ENCODE measurements at regions of chr1 and their contacts with region 1.

Region 1: GRCh38 chr1:216221260-216221700 is 202.0 kb downstream of the USH2A start:
- DNase-seq: peak; percentile 35
- H3K4me3 ChIP-seq: peak overlapping the region; percentile 51 to 54
- H3K27ac ChIP-seq: peak overlapping the region in 1 of 2 experiments; percentile 88; a peak in 2 of 4 replicates
- H3K4me1 ChIP-seq: peaks cover 0 to 16% of the 10 kb centered on the region in 2 experiments; a peak in 2 of 4 replicates
- H3K27me3 ChIP-seq: no peaks in the 10 kb centered on the region
- CTCF ChIP-seq: peak; percentile 86
- EP300 ChIP-seq: 0 out of 4 replicates have a peak, but pooled peaks of 1 of the 2 experiments have one; percentile 10
- RAD21 ChIP-seq: peak; percentile 83

Region 2: DNA sequence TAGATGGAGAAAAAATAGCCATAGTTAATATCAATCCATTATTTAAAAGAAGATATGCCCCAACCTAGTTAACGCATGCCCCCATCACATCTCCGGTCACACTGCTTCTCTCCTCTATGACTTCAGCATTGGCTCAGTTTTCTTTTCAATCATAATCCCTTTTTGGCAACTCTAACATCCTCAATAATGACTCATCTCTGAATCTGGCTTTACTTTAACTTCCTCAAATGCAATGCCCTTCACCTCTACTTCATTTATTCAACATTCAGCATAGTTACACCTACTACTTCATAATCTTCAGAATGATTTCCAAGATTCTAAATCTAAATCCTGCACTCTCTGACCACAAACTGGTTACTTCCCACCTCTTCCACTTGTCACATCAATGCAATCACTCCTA is 215.4 kb before region 1 on chr1:
- CTCF ChIA-PET with region 1: interaction called, 13 read pairs
- POLR2A ChIA-PET with region 1: no interaction called
- DNase-seq: no peak
- H3K4me3 ChIP-seq: no peak overlapping the region
- H3K27ac ChIP-seq: no peak overlapping the region
- H3K4me1 ChIP-seq: no peaks in the 10 kb centered on the region; a peak in 1 of 4 replicates
- H3K27me3 ChIP-seq: no peaks in the 10 kb centered on the region
- CTCF ChIP-seq: no peak
- EP300 ChIP-seq: no peak
- RAD21 ChIP-seq: no peak

Region 3: GRCh38 chr1:216183007-216183406 is 38.3 kb before region 1 on chr1:
- CTCF ChIA-PET with region 1: interaction called, 20 read pairs
- POLR2A ChIA-PET with region 1: no interaction called
- DNase-seq: no peak
- H3K4me3 ChIP-seq: peak overlapping the region in 1 of 2 experiments; percentile 22; a peak in 1 of 4 replicates
- H3K27ac ChIP-seq: no peak overlapping the region
- H3K4me1 ChIP-seq: peaks cover 12 to 15% of the 10 kb centered on the region in 2 experiments; a peak in 3 of 4 replicates
- H3K27me3 ChIP-seq: no peaks in the 10 kb centered on the region
- CTCF ChIP-seq: no peak
- EP300 ChIP-seq: no peak
- RAD21 ChIP-seq: no peak

Region 4: GRCh38 chr1:216201946-216202345 is 19.3 kb before region 1 on chr1:
- CTCF ChIA-PET with region 1: interaction called, 15 read pairs
- POLR2A ChIA-PET with region 1: no interaction called
- DNase-seq: no peak
- H3K4me3 ChIP-seq: no peak overlapping the region
- H3K27ac ChIP-seq: no peak overlapping the region
- H3K4me1 ChIP-seq: no peaks in the 10 kb centered on the region; a peak in 1 of 4 replicates
- H3K27me3 ChIP-seq: no peaks in the 10 kb centered on the region
- CTCF ChIP-seq: no peak
- EP300 ChIP-seq: no peak
- RAD21 ChIP-seq: no peak

Region 5: GRCh38 chr1:216523449-216524190 is 302.3 kb after region 1 on chr1:
- CTCF ChIA-PET with region 1: interaction called, 14 read pairs
- POLR2A ChIA-PET with region 1: no interaction called
- DNase-seq: no peak
- H3K4me3 ChIP-seq: no peak overlapping the region
- H3K27ac ChIP-seq: peak overlapping the region in 1 of 2 experiments; percentile 39; a peak in 1 of 4 replicates
- H3K4me1 ChIP-seq: peaks cover 0 to 31% of the 10 kb centered on the region in 2 experiments; a peak in 2 of 4 replicates
- H3K27me3 ChIP-seq: no peaks in the 10 kb centered on the region
- CTCF ChIP-seq: no peak
- EP300 ChIP-seq: no peak
- RAD21 ChIP-seq: no peak

Region 6: GRCh38 chr1:216723274-216723780 is 502.0 kb after region 1 on chr1 and contains the start of gene ESRRG:
- CTCF ChIA-PET with region 1: interaction called, 18 read pairs
- POLR2A ChIA-PET with region 1: no interaction called
- DNase-seq: peak; percentile 75
- H3K4me3 ChIP-seq: peak within 1 kb of the TSS; percentile 61 to 71
- H3K27ac ChIP-seq: peak within 1 kb of the TSS in 1 of 2 experiments; percentile 76; a peak in 2 of 4 replicates
- H3K4me1 ChIP-seq: peaks cover 0 to 4% of the 10 kb centered on the region in 2 experiments; a peak in 2 of 4 replicates
- H3K27me3 ChIP-seq: no peaks in the 10 kb centered on the region
- CTCF ChIP-seq: no peak
- EP300 ChIP-seq: peak in 1 of 2 experiments; percentile 27; a peak in 1 of 4 replicates
- RAD21 ChIP-seq: no peak
- polyA plus RNA-seq, gene ESRRG: 0.26 and 0.57 TPM in 2 replicates

Measured in SK-N-SH (cell line).